ENCODE measurements at regions of chr9 and their contacts with region 1.

Region 1: DNA sequence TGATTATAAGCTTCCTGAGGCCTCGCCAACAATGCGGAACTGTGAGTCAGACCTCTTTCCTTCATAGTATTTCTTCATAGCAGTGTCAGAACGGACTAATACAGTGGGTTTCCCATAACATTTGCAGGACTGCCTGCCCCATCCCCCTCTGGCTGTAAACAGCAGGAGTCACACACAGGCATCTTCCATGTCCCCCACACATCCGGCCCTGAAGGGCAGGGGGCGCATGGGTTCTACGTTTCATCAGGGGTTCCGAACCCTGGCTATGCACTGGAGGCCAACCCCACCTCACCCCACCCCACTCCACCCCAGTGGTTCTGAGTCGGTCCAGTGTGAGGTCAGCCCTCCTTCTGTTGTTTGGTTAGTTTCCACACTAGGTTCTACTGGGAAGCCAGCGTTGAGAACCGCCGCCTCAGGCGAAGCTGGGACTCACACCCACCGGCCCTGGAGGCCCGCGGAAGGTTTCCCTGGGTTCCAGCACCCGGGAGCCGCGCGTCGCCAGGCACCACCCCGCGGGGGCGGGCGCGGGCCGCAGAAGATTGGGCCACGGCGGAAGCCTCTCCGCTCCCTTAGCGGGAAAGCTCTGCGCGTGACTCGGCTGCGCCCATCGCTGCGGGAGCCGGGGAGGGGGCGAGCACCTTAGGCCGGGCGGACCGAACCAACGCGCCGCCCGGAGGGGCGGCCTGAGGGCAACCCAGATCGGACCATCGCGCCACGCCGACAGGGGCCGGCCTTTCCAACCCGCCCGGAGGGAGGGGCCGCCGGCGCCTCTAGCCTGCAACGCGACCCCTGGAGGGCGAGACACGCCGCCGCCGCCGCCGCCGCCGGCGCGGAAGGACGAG is at the start of gene RUSC2:
- DNase-seq: peak; percentile 85 to 91 (median 88)
- H3K4me3 ChIP-seq: peak within 1 kb of the TSS; percentile 63 to 93 (median 82)
- H3K27ac ChIP-seq: peak within 1 kb of the TSS; percentile 82 to 96 (median 92)
- H3K4me1 ChIP-seq: peaks cover 17 to 18% of the 10 kb centered on the region in 2 donors
- H3K27me3 ChIP-seq: no peaks in the 10 kb centered on the region
- CTCF ChIP-seq: peak; percentile 30 to 72 (median 58)
- POLR2A ChIP-seq: peak; percentile 31 to 86
- total RNA-seq, gene RUSC2: 5.9 to 42.0 (median 29.5) TPM

Region 2: DNA sequence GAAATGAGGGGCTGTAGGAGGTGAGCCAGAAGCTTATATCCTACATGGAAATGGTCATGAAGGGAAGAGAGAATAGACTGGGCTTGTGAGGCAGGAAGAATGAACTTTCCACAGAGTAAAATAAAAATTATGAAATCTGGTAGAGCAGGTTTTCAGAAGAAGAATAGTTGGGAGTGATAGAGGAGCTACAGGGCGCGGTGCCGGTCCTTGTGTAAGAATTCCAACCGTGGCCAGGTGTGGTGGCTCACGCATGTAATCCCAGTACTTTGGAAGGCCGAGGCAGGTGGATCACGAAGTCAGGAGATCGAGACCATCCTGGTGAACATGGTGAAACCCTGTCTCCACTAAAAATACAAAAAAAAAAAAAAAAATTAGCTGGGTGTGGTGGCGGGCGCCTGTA is 336.6 kb before region 1 on chr9:
- intact Hi-C with region 1: no loop called
- DNase-seq: no peak
- H3K4me3 ChIP-seq: no peak overlapping the region
- H3K27ac ChIP-seq: no peak overlapping the region
- H3K4me1 ChIP-seq: no peaks in the 10 kb centered on the region
- H3K27me3 ChIP-seq: no peaks in the 10 kb centered on the region
- CTCF ChIP-seq: no peak
- POLR2A ChIP-seq: no peak

Region 3: GRCh38 chr9:35303567-35303966 is 186.0 kb before region 1 on chr9:
- intact Hi-C with region 1: no loop called
- DNase-seq: no peak
- H3K4me3 ChIP-seq: no peak overlapping the region
- H3K27ac ChIP-seq: no peak overlapping the region
- H3K4me1 ChIP-seq: no peaks in the 10 kb centered on the region
- H3K27me3 ChIP-seq: no peaks in the 10 kb centered on the region
- CTCF ChIP-seq: no peak
- POLR2A ChIP-seq: no peak

Region 4: GRCh38 chr9:35553670-35554543 is 64.4 kb after region 1 on chr9:
- intact Hi-C with region 1: loop called (anchors 5 kb)
- DNase-seq: peak; percentile 74 to 91 (median 81)
- H3K4me3 ChIP-seq: no peak overlapping the region
- H3K27ac ChIP-seq: peak overlapping the region in 4 of 5 donors; percentile 26 to 79 (median 55)
- H3K4me1 ChIP-seq: peaks cover 5 to 21% of the 10 kb centered on the region in 2 donors
- H3K27me3 ChIP-seq: no peaks in the 10 kb centered on the region
- CTCF ChIP-seq: peak; percentile 86 to 98 (median 92)
- POLR2A ChIP-seq: no peak

Region 5: DNA sequence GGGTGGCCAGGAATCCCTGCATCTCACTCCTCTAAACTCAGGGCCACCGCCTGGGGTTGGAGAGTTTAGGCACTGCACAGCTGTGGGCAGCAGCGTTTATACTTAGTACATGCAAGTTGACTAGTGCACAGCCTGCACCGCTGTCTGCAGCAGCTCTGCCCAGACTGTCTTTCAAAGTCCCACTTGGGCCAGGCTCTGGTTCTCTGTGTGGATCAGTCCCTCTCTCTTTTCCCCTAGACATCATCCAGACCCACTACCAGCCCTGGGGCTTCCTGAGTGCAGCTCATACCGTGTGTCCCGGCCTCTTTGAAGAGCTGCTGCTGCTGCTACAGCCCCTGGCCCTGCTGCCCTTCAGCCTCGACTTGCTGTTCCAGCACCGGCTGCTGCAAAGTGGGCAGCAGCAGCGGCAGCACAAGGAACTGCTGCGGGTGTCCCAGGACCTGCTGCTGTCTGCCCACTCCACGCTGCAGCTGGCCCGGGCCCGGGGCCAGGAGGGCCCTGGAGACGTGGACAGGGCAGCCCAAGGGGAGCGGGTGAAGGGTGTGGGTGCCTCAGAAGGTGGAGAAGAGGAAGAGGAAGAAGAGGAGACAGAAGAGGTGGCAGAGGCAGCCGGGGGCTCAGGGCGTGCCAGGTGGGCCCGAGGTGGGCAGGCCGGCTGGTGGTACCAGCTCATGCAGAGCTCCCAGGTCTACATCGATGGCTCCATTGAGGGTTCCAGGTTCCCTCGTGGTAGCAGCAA is 70.4 kb after region 1 on chr9:
- intact Hi-C with region 1: loop called in 1 of 2 experiments (anchors 5 kb)
- DNase-seq: peak in 1 of 7 donors; percentile 53
- H3K4me3 ChIP-seq: no peak overlapping the region
- H3K27ac ChIP-seq: peak overlapping the region in 3 of 5 donors; percentile 16 to 89 (median 79)
- H3K4me1 ChIP-seq: peaks cover 29 to 50% of the 10 kb centered on the region in 2 donors
- H3K27me3 ChIP-seq: no peaks in the 10 kb centered on the region
- CTCF ChIP-seq: no peak
- POLR2A ChIP-seq: no peak

Region 6: DNA sequence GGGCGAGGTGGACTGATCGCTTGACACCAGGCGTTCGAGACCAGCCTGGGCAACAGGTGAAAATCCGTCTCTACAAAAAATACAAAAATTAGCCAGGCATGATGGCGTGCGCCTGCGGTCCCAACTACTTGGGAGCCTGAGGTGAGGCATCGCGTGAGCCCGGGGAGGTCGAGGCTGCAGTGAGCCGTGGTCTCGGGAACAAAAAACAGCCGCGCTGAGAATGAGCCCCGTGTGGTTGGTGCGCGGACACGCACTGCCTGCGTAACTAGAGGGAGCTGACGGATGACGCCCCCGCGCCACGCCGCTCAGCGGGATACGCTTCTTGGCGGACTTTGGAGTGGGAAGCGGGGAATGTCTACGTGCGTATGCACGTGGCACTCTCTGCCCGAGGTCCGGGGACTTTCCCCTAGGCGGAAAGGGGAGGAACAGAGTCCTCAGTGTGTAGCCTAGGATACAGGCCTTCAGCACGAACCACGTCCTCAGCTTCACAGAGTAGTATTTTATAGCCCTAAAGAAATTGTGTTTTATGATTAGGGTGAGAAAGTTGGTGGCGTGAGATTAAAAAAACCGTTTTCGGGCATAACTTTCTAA is 168.1 kb after region 1 on chr9 and contains the start of gene RMRP:
- intact Hi-C with region 1: no loop called
- DNase-seq: peak; percentile 97 to 99 (median 99)
- H3K4me3 ChIP-seq: peak within 1 kb of the TSS; percentile 53 to 82 (median 78)
- H3K27ac ChIP-seq: peak within 1 kb of the TSS; percentile 80 to 97 (median 95)
- H3K4me1 ChIP-seq: peaks cover 6 to 36% of the 10 kb centered on the region in 2 donors
- H3K27me3 ChIP-seq: no peaks in the 10 kb centered on the region
- CTCF ChIP-seq: peak; percentile 9 to 80 (median 62)
- POLR2A ChIP-seq: peak in 1 of 2 donors; percentile 90
- total RNA-seq, gene RMRP: 885 to 23,366 (median 10,611) TPM

Measured in adrenal gland (tissue), 19 donors.